AG04450 (cell line): ENCODE measurements at regions of chr4 and their contacts with region 1.

Region 1: DNA sequence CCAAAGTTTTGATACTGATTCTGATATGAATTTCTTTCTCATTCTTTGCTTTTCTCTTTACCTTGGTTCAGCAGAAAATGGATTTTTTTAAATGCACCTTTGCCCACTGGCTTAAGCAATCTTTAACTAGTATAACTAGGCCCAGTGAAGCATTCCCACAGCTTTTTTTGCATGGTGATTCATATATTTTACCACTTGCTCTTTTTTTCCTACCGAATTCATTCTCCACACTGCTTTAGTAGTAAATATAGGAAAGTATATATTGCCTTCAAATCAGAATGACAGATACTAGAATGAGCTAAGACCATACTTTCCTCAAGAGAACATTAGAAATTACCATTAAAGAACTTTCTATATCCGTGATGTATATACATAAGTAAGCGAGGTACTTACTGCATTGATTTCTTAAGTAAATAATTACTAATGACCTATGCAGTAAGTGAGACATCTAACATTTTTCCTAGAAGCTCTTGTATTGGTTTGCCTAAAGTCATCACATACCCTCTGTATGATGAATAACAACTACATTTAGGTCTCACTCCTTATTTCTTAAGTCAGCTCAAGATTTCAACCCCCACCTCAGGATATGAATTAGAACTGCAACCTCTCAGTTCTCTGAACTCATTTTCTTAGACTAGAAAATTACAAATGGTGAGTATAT is 44.2 kb downstream of the SLC4A4 start:
- DNase-seq: no peak
- H3K4me3 ChIP-seq: no peak overlapping the region
- H3K27ac ChIP-seq: no peak overlapping the region
- H3K27me3 ChIP-seq: no peaks in the 10 kb centered on the region
- CTCF ChIP-seq: no peak

Region 2: DNA sequence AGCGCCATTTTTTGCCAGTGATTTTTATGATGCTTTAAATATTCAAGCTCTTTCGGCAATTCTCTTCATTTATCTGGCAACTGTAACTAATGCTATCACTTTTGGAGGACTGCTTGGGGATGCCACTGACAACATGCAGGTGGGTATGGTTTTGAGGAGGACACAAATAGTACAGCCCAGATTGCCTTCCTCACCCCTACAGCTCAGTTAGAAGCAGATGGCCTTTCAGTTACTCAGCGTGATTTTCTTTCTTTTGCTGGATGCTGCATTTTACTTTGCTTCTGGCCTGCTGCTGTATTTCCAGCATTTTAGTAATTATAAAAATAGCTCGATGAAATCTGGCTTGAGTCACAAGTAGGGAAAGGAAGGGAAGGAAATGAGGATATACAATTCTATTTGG is 70.5 kb after region 1 on chr4:
- CTCF ChIA-PET with region 1: interaction called, 10 read pairs
- POLR2A ChIA-PET with region 1: no interaction called
- DNase-seq: no peak
- H3K4me3 ChIP-seq: no peak overlapping the region
- H3K27ac ChIP-seq: no peak overlapping the region
- H3K27me3 ChIP-seq: no peaks in the 10 kb centered on the region
- CTCF ChIP-seq: no peak